Endothelial cell of umbilical vein (primary cell): ENCODE measurements at regions of chr12 and their contacts with region 1.

Region 1: DNA sequence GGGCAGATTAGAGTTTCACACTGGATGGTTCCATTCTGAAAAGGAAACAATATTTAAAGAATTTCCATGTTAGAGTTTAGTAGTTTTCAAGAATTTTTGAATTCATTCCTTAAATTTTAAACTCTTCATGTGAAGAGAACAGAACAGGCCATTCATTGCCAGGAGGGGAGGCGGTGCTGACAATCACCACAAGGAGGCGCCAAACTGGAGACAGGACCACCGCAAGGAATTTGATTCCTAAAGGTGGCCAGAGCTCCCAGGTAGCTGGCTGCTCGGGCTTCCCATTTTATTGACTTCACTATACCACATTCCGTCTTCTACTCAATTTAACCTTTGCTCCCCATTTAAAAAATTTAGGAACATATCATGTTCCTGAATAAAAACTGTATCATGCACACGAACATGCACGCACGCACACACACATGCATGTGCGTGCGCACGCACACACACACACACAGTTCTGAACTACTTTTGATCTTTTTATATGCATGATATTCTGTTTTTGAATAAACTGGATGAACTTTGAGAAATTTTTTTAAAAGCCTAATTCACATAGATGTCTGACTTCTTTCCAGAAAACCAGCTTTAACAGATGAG is 101.2 kb downstream of the NELL2 start:
- DNase-seq: peak; percentile 41
- H3K4me3 ChIP-seq: no peak overlapping the region
- H3K27ac ChIP-seq: no peak overlapping the region
- H3K4me1 ChIP-seq: no peaks in the 10 kb centered on the region
- H3K27me3 ChIP-seq: no peaks in the 10 kb centered on the region
- CTCF ChIP-seq: peak; percentile 78 to 86
- POLR2A ChIP-seq: no peak

Region 2: DNA sequence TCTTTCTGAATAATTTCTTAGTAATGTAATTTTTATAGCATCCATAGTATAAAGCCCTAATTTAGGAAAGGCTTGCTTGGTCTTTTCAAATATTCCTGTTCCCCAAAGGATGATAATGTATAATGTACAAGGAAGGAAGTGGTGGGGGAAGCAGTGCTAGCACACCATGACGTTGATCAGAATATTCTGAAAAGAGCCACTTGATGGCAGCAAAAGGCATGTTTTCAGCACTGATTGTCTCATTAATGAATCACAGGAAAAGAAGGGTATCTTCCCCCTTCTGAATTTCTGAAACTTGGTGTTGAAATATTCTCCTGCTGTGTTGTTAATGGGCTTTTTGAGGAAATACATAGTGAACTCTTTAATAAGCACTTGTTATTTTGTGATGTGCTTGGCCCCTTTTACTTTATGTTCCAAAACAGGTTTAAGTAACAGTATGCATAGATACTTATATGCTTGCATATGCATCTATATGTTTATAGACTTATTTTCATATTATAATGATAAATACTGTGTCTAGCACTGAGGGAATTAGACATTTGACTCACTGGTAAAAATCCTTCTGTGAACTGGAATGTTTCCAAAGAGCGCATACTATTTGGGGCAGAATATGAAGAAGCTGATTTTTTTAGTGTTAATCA is 817.1 kb before region 1 on chr12:
- CTCF ChIA-PET with region 1: no interaction called
- POLR2A ChIA-PET with region 1: no interaction called
- dilution Hi-C with region 1: no loop called
- intact Hi-C with region 1: loop called (anchors 2 kb)
- DNase-seq: peak; percentile 50
- H3K4me3 ChIP-seq: no peak overlapping the region
- H3K27ac ChIP-seq: no peak overlapping the region
- H3K4me1 ChIP-seq: no peaks in the 10 kb centered on the region
- H3K27me3 ChIP-seq: no peaks in the 10 kb centered on the region
- CTCF ChIP-seq: peak; percentile 33 to 34
- POLR2A ChIP-seq: no peak

Region 3: GRCh38 chr12:44804068-44804467 is 29.2 kb after region 1 on chr12:
- CTCF ChIA-PET with region 1: no interaction called
- POLR2A ChIA-PET with region 1: no interaction called
- dilution Hi-C with region 1: no loop called
- intact Hi-C with region 1: no loop called
- DNase-seq: no peak
- H3K4me3 ChIP-seq: no peak overlapping the region
- H3K27ac ChIP-seq: no peak overlapping the region
- H3K4me1 ChIP-seq: no peaks in the 10 kb centered on the region
- H3K27me3 ChIP-seq: no peaks in the 10 kb centered on the region
- CTCF ChIP-seq: no peak
- POLR2A ChIP-seq: no peak

Region 4: DNA sequence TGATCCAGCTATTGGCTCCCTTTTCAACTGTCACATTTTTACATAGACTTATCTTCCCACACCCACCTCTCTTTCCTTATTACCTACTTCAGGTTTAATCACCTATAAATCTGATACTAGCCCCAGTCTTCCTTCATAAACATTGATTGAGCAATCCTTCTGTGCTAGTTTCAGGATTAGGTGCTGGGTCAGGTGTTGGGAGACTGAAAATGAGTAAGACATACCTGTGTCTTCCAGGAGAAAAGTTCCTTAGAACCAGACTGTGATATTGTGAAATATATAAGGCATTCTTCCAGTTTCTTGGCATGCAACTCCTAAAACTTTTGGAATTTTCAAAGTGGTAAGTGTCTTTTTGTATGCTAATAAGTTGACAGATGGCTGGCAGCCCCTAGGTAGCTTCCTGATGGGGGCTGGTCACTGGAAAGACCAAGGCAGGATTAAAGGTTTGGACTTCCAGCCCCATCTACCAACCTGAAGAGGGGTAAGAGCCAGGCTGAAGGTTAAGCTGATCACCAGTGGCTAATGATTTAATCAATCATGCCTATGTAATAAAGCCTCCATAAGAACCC is 445.5 kb after region 1 on chr12:
- CTCF ChIA-PET with region 1: no interaction called
- POLR2A ChIA-PET with region 1: no interaction called
- dilution Hi-C with region 1: no loop called
- intact Hi-C with region 1: no loop called
- DNase-seq: no peak
- H3K4me3 ChIP-seq: no peak overlapping the region
- H3K27ac ChIP-seq: no peak overlapping the region
- H3K4me1 ChIP-seq: peaks cover 8% of the 10 kb centered on the region
- H3K27me3 ChIP-seq: no peaks in the 10 kb centered on the region
- CTCF ChIP-seq: no peak
- POLR2A ChIP-seq: no peak